ENCODE measurements at regions of chr17 and their contacts with region 1.

Region 1: GRCh38 chr17:8222630-8223356 is 12.4 kb upstream of the AURKB start:
- DNase-seq: peak; percentile 92 to 96
- ATAC-seq: peak; percentile 39 to 64 (median 58)
- H3K4me3 ChIP-seq: peak overlapping the region; percentile 73
- H3K4me3 Mint-ChIP-seq: peak overlapping the region; percentile 99
- H3K27ac ChIP-seq: peak overlapping the region; percentile 93
- H3K27ac Mint-ChIP-seq: peak overlapping the region; percentile 100
- H3K4me1 ChIP-seq: peaks cover 50% of the 10 kb centered on the region
- H3K4me1 Mint-ChIP-seq: peaks cover 53 to 59% of the 10 kb centered on the region in 2 donors
- H3K27me3 ChIP-seq: no peaks in the 10 kb centered on the region
- H3K27me3 Mint-ChIP-seq: peaks cover 8 to 9% of the 10 kb centered on the region in 2 donors
- CTCF ChIP-seq: no peak

Region 2: GRCh38 chr17:7972131-7972785 is 250.5 kb before region 1 on chr17:
- intact Hi-C with region 1: no loop called
- DNase-seq: no peak
- ATAC-seq: no peak
- H3K4me3 ChIP-seq: no peak overlapping the region
- H3K4me3 Mint-ChIP-seq: no peak overlapping the region
- H3K27ac ChIP-seq: no peak overlapping the region
- H3K27ac Mint-ChIP-seq: no peak overlapping the region
- H3K4me1 ChIP-seq: no peaks in the 10 kb centered on the region
- H3K4me1 Mint-ChIP-seq: no peaks in the 10 kb centered on the region
- H3K27me3 ChIP-seq: no peaks in the 10 kb centered on the region
- H3K27me3 Mint-ChIP-seq: peaks cover 16% of the 10 kb centered on the region in 2 donors
- CTCF ChIP-seq: no peak

Region 3: GRCh38 chr17:8041249-8041928 is 181.4 kb before region 1 on chr17:
- intact Hi-C with region 1: no loop called
- DNase-seq: peak in 1 of 2 donors; percentile 72
- ATAC-seq: peak; percentile 54 to 64 (median 58)
- H3K4me3 ChIP-seq: no peak overlapping the region
- H3K4me3 Mint-ChIP-seq: no peak overlapping the region
- H3K27ac ChIP-seq: no peak overlapping the region
- H3K27ac Mint-ChIP-seq: no peak overlapping the region
- H3K4me1 ChIP-seq: no peaks in the 10 kb centered on the region
- H3K4me1 Mint-ChIP-seq: peaks cover 5 to 7% of the 10 kb centered on the region in 2 donors
- H3K27me3 ChIP-seq: peaks cover 3% of the 10 kb centered on the region
- H3K27me3 Mint-ChIP-seq: peaks cover 15 to 25% of the 10 kb centered on the region in 2 donors
- CTCF ChIP-seq: peak; percentile 54

Region 4: GRCh38 chr17:8068736-8069586 is 153.8 kb before region 1 on chr17:
- intact Hi-C with region 1: no loop called
- DNase-seq: no peak
- ATAC-seq: peak in 2 of 3 donors; percentile 6 to 71
- H3K4me3 ChIP-seq: no peak overlapping the region
- H3K4me3 Mint-ChIP-seq: no peak overlapping the region
- H3K27ac ChIP-seq: no peak overlapping the region
- H3K27ac Mint-ChIP-seq: peak overlapping the region in 1 of 2 donors; percentile 66
- H3K4me1 ChIP-seq: peaks cover 38% of the 10 kb centered on the region
- H3K4me1 Mint-ChIP-seq: peaks cover 14 to 23% of the 10 kb centered on the region in 2 donors
- H3K27me3 ChIP-seq: peaks cover 30% of the 10 kb centered on the region
- H3K27me3 Mint-ChIP-seq: peaks cover 31 to 40% of the 10 kb centered on the region in 2 donors
- CTCF ChIP-seq: no peak

Region 5: DNA sequence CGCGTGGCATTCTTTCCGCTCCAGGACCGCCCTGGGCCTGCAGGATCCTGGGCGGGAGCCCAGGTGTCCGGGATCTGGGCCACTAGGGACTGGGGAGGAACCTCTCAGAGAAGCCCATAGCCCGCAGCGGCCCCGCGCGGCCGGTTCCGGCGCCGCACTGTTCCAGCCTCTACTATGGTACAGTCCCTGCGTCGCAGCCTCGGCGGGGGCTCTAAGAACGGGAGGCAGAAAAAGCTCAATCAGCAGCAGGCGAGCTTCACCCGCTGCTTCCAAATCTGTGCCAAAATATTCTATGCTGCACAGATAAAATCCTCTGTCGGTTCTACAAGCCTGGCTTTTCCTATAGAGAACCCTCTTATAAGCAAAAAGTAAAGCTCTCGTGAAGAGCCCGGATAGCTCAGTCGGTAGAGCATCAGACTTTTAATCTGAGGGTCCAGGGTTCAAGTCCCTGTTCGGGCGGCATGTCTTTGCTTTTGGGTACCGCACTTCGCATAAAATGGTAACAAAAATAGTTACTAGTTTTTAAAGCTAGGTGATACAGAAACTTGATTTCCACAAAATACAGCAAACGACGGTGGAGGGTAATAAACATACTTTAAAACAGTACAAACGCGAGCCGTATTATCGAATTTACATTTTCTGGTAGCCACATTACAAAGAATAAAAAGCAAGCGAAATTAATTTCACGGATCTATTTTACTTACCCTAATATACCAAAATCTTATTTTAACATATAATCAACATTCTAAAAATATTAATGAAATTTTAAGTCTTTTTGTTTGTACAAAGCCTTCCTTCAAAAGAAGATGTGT is 103.8 kb before region 1 on chr17:
- intact Hi-C with region 1: loop called (anchors 1 kb)
- DNase-seq: peak; percentile 84 to 90
- ATAC-seq: peak; percentile 62 to 79 (median 68)
- H3K4me3 ChIP-seq: peak overlapping the region; percentile 91
- H3K4me3 Mint-ChIP-seq: peak overlapping the region; percentile 93
- H3K27ac ChIP-seq: peak overlapping the region; percentile 76
- H3K27ac Mint-ChIP-seq: peak overlapping the region; percentile 98 to 100
- H3K4me1 ChIP-seq: peaks cover 57% of the 10 kb centered on the region
- H3K4me1 Mint-ChIP-seq: peaks cover 55 to 56% of the 10 kb centered on the region in 2 donors
- H3K27me3 ChIP-seq: peaks cover 48% of the 10 kb centered on the region
- H3K27me3 Mint-ChIP-seq: peaks cover 51 to 55% of the 10 kb centered on the region in 2 donors
- CTCF ChIP-seq: peak; percentile 89

Region 6: DNA sequence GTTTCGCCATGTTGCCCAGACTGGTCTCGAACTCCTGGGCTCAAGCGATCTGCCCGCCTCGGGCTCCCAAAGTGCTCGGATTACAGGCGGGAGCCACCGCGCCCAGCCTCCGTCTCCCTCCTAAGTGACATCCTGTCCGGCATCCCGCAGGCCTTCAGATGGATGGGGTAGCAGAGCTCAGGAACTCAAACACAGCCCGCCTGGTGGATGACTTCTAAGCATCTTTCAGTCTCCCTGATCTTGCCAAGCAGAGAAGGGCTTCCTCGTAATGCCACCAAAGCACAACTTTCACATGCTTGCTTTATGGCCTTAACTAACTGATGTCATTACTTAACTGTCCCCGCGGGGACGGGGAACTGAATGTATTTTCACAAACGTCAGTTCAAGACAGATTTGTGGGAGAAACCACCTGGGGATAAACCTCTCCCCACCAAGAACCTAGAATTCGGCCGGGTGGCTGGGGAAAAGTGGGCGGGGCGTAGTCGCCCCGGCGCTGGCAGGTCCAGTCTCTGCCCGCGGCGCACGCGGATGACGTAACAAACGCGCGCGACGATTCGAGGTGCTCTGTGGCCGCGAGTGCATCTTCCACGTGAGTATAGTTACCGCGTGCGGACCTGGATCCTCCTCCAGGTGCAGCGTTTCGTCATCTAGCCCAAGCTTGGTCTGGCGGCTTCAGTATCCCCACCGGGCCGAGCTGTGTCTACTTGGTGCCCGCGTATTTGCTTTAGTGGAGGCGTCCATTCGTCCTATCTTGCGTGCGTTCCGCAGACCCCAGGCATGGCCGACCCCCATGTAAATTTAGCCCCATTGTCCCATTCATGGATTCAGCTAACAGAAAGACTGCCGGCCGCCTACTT is 26.2 kb after region 1 on chr17 and contains the start of gene PFAS:
- intact Hi-C with region 1: loop called (anchors 1 kb)
- DNase-seq: peak; percentile 98 to 99
- ATAC-seq: peak; percentile 51 to 71 (median 63)
- H3K4me3 ChIP-seq: peak within 1 kb of the TSS; percentile 74
- H3K4me3 Mint-ChIP-seq: peak within 1 kb of the TSS; percentile 94
- H3K27ac ChIP-seq: peak within 1 kb of the TSS; percentile 99
- H3K27ac Mint-ChIP-seq: peak within 1 kb of the TSS; percentile 92 to 97
- H3K4me1 ChIP-seq: peaks cover 37% of the 10 kb centered on the region
- H3K4me1 Mint-ChIP-seq: peaks cover 33 to 51% of the 10 kb centered on the region in 2 donors
- H3K27me3 ChIP-seq: no peaks in the 10 kb centered on the region
- H3K27me3 Mint-ChIP-seq: no peaks in the 10 kb centered on the region
- CTCF ChIP-seq: no peak
- total RNA-seq, gene PFAS: 23.6 to 30.0 (median 24.0) TPM

Region 7: GRCh38 chr17:8300627-8301242 is 77.9 kb after region 1 on chr17:
- intact Hi-C with region 1: loop called (anchors 2 kb)
- DNase-seq: peak; percentile 45 to 87
- ATAC-seq: peak; percentile 91 to 96 (median 93)
- H3K4me3 ChIP-seq: no peak overlapping the region
- H3K4me3 Mint-ChIP-seq: no peak overlapping the region
- H3K27ac ChIP-seq: no peak overlapping the region
- H3K27ac Mint-ChIP-seq: peak overlapping the region in 1 of 2 donors; percentile 5
- H3K4me1 ChIP-seq: peaks cover 6% of the 10 kb centered on the region
- H3K4me1 Mint-ChIP-seq: peaks cover 13 to 16% of the 10 kb centered on the region in 2 donors
- H3K27me3 ChIP-seq: no peaks in the 10 kb centered on the region
- H3K27me3 Mint-ChIP-seq: no peaks in the 10 kb centered on the region
- CTCF ChIP-seq: peak; percentile 87